BJ (cell line): ENCODE measurements at regions of chr1 and their contacts with region 1.

Region 1: DNA sequence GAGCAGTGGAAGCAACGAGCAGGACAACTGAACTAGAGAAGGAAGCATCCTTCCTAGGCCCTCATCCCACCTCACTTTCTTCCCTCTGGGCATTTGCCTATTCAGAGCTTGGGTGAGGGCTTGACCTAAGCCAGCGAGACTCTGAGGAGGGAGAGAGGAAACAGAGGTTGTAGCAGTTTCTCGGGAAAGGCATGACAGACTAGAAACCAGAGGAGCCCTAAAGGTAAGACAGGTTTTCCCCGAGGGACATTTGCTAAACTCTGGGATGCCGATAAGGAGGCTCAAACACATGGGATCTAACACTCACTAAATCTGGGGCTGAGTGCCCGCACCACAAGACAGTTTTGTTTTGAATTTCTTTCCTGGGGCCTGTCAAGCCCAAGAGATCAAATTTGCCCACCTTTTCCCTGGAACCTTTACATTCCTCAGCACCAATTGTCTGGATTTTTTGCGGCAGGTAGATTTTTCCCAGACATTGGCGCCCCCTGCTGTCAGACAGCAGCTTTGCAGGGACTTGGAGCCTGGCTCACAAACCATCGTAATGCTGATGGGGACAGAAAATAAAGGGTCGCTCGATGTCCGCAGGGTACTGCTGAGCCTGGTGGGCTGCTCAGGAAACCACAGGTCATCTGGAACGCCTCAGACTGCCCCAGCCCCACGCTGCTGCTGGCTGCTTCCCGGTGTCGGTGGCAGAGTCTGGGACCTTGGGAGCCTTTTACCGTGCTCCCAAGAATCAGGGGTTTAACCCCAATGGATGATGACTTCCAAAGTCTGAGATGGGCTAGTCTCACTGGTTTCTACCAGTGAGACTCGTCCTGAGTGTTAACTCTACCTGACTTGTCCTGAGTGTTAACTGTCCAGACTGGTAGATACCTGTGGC is 23.4 kb upstream of the TSPAN2 start:
- DNase-seq: no peak
- H3K4me3 ChIP-seq: no peak overlapping the region
- H3K27me3 ChIP-seq: no peaks in the 10 kb centered on the region
- CTCF ChIP-seq: peak; percentile 93

Region 2: DNA sequence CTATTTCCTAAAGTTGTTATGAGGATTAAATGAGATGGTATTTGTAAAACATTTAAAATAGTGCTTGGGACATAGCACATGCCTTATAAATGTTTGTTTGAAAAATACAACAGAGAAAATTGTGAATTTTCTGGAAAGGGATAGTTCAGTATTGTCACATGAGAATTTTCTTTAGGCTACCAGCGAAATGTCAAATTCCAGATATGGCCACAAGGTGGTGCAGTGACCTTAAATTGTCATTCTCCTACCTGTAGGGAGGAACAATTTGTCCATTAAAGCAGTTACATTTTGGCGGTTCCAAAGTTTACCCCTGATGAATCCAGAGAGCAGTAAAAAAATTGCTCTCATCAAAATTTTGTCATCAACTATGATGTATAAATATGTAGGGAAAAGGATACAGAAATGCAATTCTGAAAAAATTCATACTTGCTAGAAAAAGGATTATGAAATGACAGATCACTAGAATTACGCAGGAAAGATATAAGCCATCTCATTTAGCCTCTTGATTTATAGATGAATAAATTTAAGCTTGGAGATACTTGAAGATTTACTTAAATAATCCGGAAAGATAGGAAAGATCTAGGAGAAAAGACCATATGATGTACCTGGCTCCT is 133.4 kb before region 1 on chr1:
- CTCF ChIA-PET with region 1: interaction called, 45 read pairs
- POLR2A ChIA-PET with region 1: no interaction called
- DNase-seq: no peak
- H3K4me3 ChIP-seq: no peak overlapping the region
- H3K27me3 ChIP-seq: peaks cover 3% of the 10 kb centered on the region; the same call in 1 of the 2 replicates
- CTCF ChIP-seq: peak; percentile 62

Region 3: DNA sequence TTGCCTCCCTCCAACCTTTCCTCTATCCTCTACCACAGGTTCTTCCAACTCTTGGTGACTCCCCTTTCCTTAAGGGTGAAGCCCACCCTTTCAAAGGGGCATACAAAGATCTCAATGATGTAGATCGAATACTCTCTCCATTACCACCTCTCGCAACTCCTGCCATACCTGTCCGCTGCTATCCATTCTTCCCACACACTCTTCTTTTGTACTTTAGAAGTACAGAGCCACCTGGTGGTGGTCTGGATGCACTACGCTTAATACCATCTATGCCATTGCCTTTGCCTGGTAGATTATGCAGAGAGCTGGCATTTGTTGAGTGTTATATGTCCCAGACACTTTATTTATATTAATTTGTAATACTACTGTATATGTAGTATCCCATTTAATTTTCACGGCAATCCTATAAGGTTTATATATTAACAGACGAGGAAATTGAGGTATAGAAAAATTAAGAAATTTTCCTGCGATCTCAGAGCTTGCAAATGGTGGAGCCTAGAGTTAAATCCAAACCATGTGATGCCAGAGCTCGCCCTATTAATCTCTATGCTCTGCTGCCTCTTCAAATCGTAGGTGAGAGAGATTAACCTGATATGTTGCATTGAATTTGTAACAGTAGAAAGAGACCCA is 60.2 kb before region 1 on chr1:
- CTCF ChIA-PET with region 1: interaction called, 38 read pairs
- POLR2A ChIA-PET with region 1: no interaction called
- DNase-seq: no peak
- H3K4me3 ChIP-seq: no peak overlapping the region
- H3K27me3 ChIP-seq: no peaks in the 10 kb centered on the region; the same call in 1 of the 2 replicates
- CTCF ChIP-seq: peak; percentile 89

Region 4: DNA sequence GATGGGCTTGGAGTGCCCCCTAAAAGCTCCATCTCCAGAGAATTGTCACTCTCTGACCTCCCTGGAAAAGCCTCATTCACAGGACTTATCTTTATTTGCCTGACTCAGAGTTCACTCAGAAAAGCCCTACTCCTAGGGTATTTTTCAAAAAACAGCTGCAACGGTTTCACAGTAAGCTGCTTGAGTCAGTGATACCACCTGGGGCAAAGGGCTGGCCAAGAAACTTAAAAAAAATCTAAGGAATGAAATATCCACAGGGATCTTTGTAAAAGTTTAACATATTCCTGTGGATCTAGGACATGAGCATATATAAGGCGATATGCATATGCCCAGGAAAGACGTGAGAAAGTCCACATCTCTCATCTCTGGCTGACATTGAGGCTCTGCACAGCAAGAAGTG is 10.4 kb after region 1 on chr1:
- CTCF ChIA-PET with region 1: interaction called, 22 read pairs
- POLR2A ChIA-PET with region 1: no interaction called
- DNase-seq: no peak
- H3K4me3 ChIP-seq: no peak overlapping the region
- H3K27me3 ChIP-seq: no peaks in the 10 kb centered on the region
- CTCF ChIP-seq: no peak

Region 5: GRCh38 chr1:115595279-115596079 is 482.7 kb after region 1 on chr1:
- CTCF ChIA-PET with region 1: interaction called, 23 read pairs
- POLR2A ChIA-PET with region 1: no interaction called
- DNase-seq: peak; percentile 63
- H3K4me3 ChIP-seq: no peak overlapping the region
- H3K27me3 ChIP-seq: no peaks in the 10 kb centered on the region
- CTCF ChIP-seq: peak; percentile 96